ENCODE measurements at regions of chr1 and their contacts with region 1.

Region 1: GRCh38 chr1:147389532-147390524 is 147.3 kb downstream of the CHD1L start:
- DNase-seq: no peak
- H3K4me3 Mint-ChIP-seq: no peak overlapping the region
- H3K27ac Mint-ChIP-seq: no peak overlapping the region
- H3K4me1 Mint-ChIP-seq: peaks cover 2% of the 10 kb centered on the region
- H3K27me3 Mint-ChIP-seq: peaks cover 16% of the 10 kb centered on the region

Region 2: GRCh38 chr1:147201276-147201675 is 188.6 kb before region 1 on chr1:
- CTCF ChIA-PET with region 1: no interaction called
- POLR2A ChIA-PET with region 1: no interaction called
- intact Hi-C with region 1: no loop called
- DNase-seq: no peak
- H3K4me3 Mint-ChIP-seq: no peak overlapping the region
- H3K27ac Mint-ChIP-seq: no peak overlapping the region
- H3K4me1 Mint-ChIP-seq: peaks cover 8% of the 10 kb centered on the region
- H3K27me3 Mint-ChIP-seq: no peaks in the 10 kb centered on the region

Region 3: GRCh38 chr1:147273409-147274336 is 116.2 kb before region 1 on chr1:
- CTCF ChIA-PET with region 1: interaction called, 79 read pairs
- POLR2A ChIA-PET with region 1: no interaction called
- intact Hi-C with region 1: loop called (anchors 1 kb)
- DNase-seq: no peak
- H3K4me3 Mint-ChIP-seq: no peak overlapping the region
- H3K27ac Mint-ChIP-seq: no peak overlapping the region
- H3K4me1 Mint-ChIP-seq: peaks cover 4% of the 10 kb centered on the region
- H3K27me3 Mint-ChIP-seq: no peaks in the 10 kb centered on the region

Region 4: GRCh38 chr1:147377263-147378246 is 12.3 kb before region 1 on chr1:
- CTCF ChIA-PET with region 1: interaction called, 30 read pairs
- POLR2A ChIA-PET with region 1: no interaction called
- intact Hi-C with region 1: no loop called
- DNase-seq: no peak
- H3K4me3 Mint-ChIP-seq: no peak overlapping the region
- H3K27ac Mint-ChIP-seq: no peak overlapping the region
- H3K4me1 Mint-ChIP-seq: no peaks in the 10 kb centered on the region
- H3K27me3 Mint-ChIP-seq: peaks cover 15% of the 10 kb centered on the region